Dorsolateral prefrontal cortex (tissue), 120 donors: ENCODE measurements at regions of chr17 and their contacts with region 1.

Region 1: GRCh38 chr17:5592382-5592781 is 8.1 kb upstream of the NLRP1 start:
- DNase-seq: no peak
- H3K4me3 ChIP-seq: no peak overlapping the region
- H3K27ac ChIP-seq: no peak overlapping the region
- H3K27me3 ChIP-seq: peaks cover 0 to 4% (median 0%) of the 10 kb centered on the region in 45 donors
- CTCF ChIP-seq: peak; percentile 47 to 89 (median 74)

Region 2: GRCh38 chr17:5610956-5611355 is 18.6 kb after region 1 on chr17:
- intact Hi-C with region 1: no loop called
- DNase-seq: no peak
- H3K4me3 ChIP-seq: no peak overlapping the region
- H3K27ac ChIP-seq: no peak overlapping the region
- H3K27me3 ChIP-seq: peaks cover 0 to 10% (median 0%) of the 10 kb centered on the region in 45 donors
- CTCF ChIP-seq: no peak

Region 3: GRCh38 chr17:5706577-5707216 is 114.3 kb after region 1 on chr17:
- intact Hi-C with region 1: loop called (anchors 2 to 5 kb)
- DNase-seq: peak in 9 of 10 donors; percentile 47 to 79 (median 68)
- H3K4me3 ChIP-seq: no peak overlapping the region
- H3K27ac ChIP-seq: peak overlapping the region in 3 of 59 donors; percentile 8 to 36 (median 12)
- H3K27me3 ChIP-seq: peaks cover 0 to 5% (median 0%) of the 10 kb centered on the region in 45 donors
- CTCF ChIP-seq: peak; percentile 46 to 86 (median 75)

Region 4: DNA sequence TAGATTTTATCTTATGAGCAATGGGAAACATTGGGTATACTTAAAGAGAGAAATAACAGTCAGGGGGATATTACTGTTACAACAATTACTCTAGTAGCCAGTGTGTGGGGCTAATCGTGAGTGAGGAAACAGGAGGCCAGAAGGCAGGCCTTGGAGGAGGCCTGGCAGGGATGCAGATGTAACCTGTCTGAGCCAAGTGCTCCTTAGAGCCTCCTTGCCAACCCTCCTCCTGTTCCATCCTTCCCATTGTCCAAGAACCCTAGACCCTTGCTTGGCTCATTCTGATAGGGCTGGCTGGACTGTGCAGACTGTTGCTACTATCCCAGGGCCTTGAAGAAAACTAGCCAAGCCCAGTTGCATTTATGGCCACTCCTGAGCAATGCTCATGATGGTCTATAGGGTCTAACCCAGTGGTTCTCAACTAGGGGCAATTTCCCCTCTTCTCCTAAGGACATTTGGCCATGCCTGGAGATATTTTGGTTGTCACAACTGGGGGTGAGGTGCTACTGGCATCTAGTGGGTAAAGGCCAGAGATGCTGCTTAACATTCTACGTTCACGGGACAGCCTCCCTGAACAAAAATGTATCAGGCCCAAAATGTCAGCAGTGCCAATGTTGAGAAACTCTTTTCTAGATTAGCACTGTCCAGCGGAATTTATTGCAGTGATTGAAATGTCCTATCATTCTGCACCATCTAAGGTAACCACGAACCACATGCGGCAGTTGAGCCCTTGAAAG is 453.4 kb after region 1 on chr17:
- intact Hi-C with region 1: loop called in 1 of 2 experiments (anchors 2 kb)
- DNase-seq: peak in 1 of 10 donors; percentile 74
- H3K4me3 ChIP-seq: no peak overlapping the region
- H3K27ac ChIP-seq: no peak overlapping the region
- H3K27me3 ChIP-seq: peaks cover 0 to 5% (median 0%) of the 10 kb centered on the region in 45 donors
- CTCF ChIP-seq: peak in 43 of 56 donors; percentile 12 to 58 (median 35)